ENCODE measurements at regions of chr1 and their contacts with region 1.

Region 1: GRCh38 chr1:92476071-92476631 is 10.6 kb downstream of the GFI1 start:
- DNase-seq: peak; percentile 51 to 86 (median 69)
- H3K4me3 ChIP-seq: no peak overlapping the region
- H3K4me3 Mint-ChIP-seq: peak overlapping the region in 6 of 7 donors; percentile 15 to 76 (median 64)
- H3K27ac ChIP-seq: peak overlapping the region; percentile 25
- H3K27ac Mint-ChIP-seq: peak overlapping the region; percentile 85 to 98 (median 96)
- H3K4me1 ChIP-seq: peaks cover 61% of the 10 kb centered on the region
- H3K4me1 Mint-ChIP-seq: peaks cover 65 to 86% (median 77%) of the 10 kb centered on the region in 3 donors
- H3K27me3 ChIP-seq: no peaks in the 10 kb centered on the region
- H3K27me3 Mint-ChIP-seq: peaks cover 0 to 5% of the 10 kb centered on the region in 2 donors

Region 2: GRCh38 chr1:92464588-92465255 is 11.4 kb before region 1 on chr1:
- CTCF ChIA-PET with region 1: interaction called, 3 read pairs
- POLR2A ChIA-PET with region 1: interaction called, 10 read pairs
- DNase-seq: no peak
- H3K4me3 ChIP-seq: no peak overlapping the region
- H3K4me3 Mint-ChIP-seq: peak overlapping the region in 5 of 7 donors; percentile 13 to 51 (median 47)
- H3K27ac ChIP-seq: no peak overlapping the region
- H3K27ac Mint-ChIP-seq: peak overlapping the region; percentile 22 to 84 (median 64)
- H3K4me1 ChIP-seq: peaks cover 44% of the 10 kb centered on the region
- H3K4me1 Mint-ChIP-seq: peaks cover 46 to 76% (median 54%) of the 10 kb centered on the region in 3 donors
- H3K27me3 ChIP-seq: no peaks in the 10 kb centered on the region
- H3K27me3 Mint-ChIP-seq: no peaks in the 10 kb centered on the region

Region 3: GRCh38 chr1:92495392-92496063 is 19.4 kb after region 1 on chr1:
- CTCF ChIA-PET with region 1: no interaction called
- POLR2A ChIA-PET with region 1: no interaction called
- DNase-seq: peak in 1 of 5 donors; percentile 38
- H3K4me3 ChIP-seq: no peak overlapping the region
- H3K4me3 Mint-ChIP-seq: peak overlapping the region in 4 of 7 donors; percentile 6 to 58 (median 48)
- H3K27ac ChIP-seq: no peak overlapping the region
- H3K27ac Mint-ChIP-seq: peak overlapping the region in 6 of 8 donors; percentile 6 to 71 (median 22)
- H3K4me1 ChIP-seq: peaks cover 21% of the 10 kb centered on the region
- H3K4me1 Mint-ChIP-seq: peaks cover 21 to 48% (median 28%) of the 10 kb centered on the region in 3 donors
- H3K27me3 ChIP-seq: no peaks in the 10 kb centered on the region
- H3K27me3 Mint-ChIP-seq: no peaks in the 10 kb centered on the region

Region 4: GRCh38 chr1:92544756-92545165 is 68.6 kb after region 1 on chr1:
- CTCF ChIA-PET with region 1: no interaction called
- POLR2A ChIA-PET with region 1: no interaction called
- DNase-seq: no peak
- H3K4me3 ChIP-seq: no peak overlapping the region
- H3K4me3 Mint-ChIP-seq: no peak overlapping the region
- H3K27ac ChIP-seq: no peak overlapping the region
- H3K27ac Mint-ChIP-seq: no peak overlapping the region
- H3K4me1 ChIP-seq: no peaks in the 10 kb centered on the region
- H3K4me1 Mint-ChIP-seq: peaks cover 3 to 5% (median 4%) of the 10 kb centered on the region in 3 donors
- H3K27me3 ChIP-seq: no peaks in the 10 kb centered on the region
- H3K27me3 Mint-ChIP-seq: peaks cover 0 to under 1% of the 10 kb centered on the region in 2 donors